Naive thymus-derived CD4-positive, alpha-beta T cell (primary cell): ENCODE measurements at regions of chr16 and their contacts with region 1.

Region 1: GRCh38 chr16:70523076-70523742 is at the start of gene COG4:
- DNase-seq: peak; percentile 72 to 94 (median 90)
- ATAC-seq: peak; percentile 91
- H3K4me3 ChIP-seq: peak within 1 kb of the TSS; percentile 100
- H3K4me3 Mint-ChIP-seq: peak within 1 kb of the TSS; percentile 93 to 100 (median 98)
- H3K27ac ChIP-seq: peak within 1 kb of the TSS; percentile 95
- H3K27ac Mint-ChIP-seq: peak within 1 kb of the TSS; percentile 98 to 100 (median 99)
- H3K4me1 ChIP-seq: peaks cover 27 to 41% of the 10 kb centered on the region in 2 donors
- H3K4me1 Mint-ChIP-seq: peaks cover 30 to 66% (median 55%) of the 10 kb centered on the region in 7 donors
- H3K27me3 ChIP-seq: no peaks in the 10 kb centered on the region
- H3K27me3 Mint-ChIP-seq: no peaks in the 10 kb centered on the region
- total RNA-seq, gene COG4: 38.3 to 68.6 (median 58.7) TPM

Region 2: GRCh38 chr16:69761983-69762813 is 761.0 kb before region 1 on chr16 and contains the start of gene WWP2:
- CTCF ChIA-PET with region 1: no interaction called
- POLR2A ChIA-PET with region 1: no interaction called
- intact Hi-C with region 1: loop called in 1 of 2 experiments (anchors 2 kb)
- DNase-seq: peak; percentile 68 to 81 (median 77)
- ATAC-seq: peak; percentile 86
- H3K4me3 ChIP-seq: peak within 1 kb of the TSS; percentile 88
- H3K4me3 Mint-ChIP-seq: peak within 1 kb of the TSS; percentile 77 to 96 (median 94)
- H3K27ac ChIP-seq: peak within 1 kb of the TSS; percentile 92
- H3K27ac Mint-ChIP-seq: peak within 1 kb of the TSS; percentile 93 to 99 (median 98)
- H3K4me1 ChIP-seq: peaks cover 10 to 14% of the 10 kb centered on the region in 2 donors
- H3K4me1 Mint-ChIP-seq: peaks cover 16 to 47% (median 37%) of the 10 kb centered on the region in 7 donors
- H3K27me3 ChIP-seq: no peaks in the 10 kb centered on the region
- H3K27me3 Mint-ChIP-seq: peaks cover 0 to 5% (median 0%) of the 10 kb centered on the region in 5 donors
- total RNA-seq, gene WWP2: 58.4 to 81.3 (median 72.1) TPM

Region 3: GRCh38 chr16:70342016-70342415 is 181.2 kb before region 1 on chr16:
- CTCF ChIA-PET with region 1: no interaction called
- POLR2A ChIA-PET with region 1: interaction called, 14 read pairs
- intact Hi-C with region 1: loop called (anchors 1 kb)
- DNase-seq: no peak
- ATAC-seq: no peak
- H3K4me3 ChIP-seq: no peak overlapping the region
- H3K4me3 Mint-ChIP-seq: no peak overlapping the region
- H3K27ac ChIP-seq: no peak overlapping the region
- H3K27ac Mint-ChIP-seq: peak overlapping the region in 3 of 9 donors; percentile 37 to 77 (median 74)
- H3K4me1 ChIP-seq: peaks cover 5 to 6% of the 10 kb centered on the region in 2 donors
- H3K4me1 Mint-ChIP-seq: peaks cover 5 to 16% (median 10%) of the 10 kb centered on the region in 7 donors
- H3K27me3 ChIP-seq: no peaks in the 10 kb centered on the region
- H3K27me3 Mint-ChIP-seq: no peaks in the 10 kb centered on the region

Region 4: DNA sequence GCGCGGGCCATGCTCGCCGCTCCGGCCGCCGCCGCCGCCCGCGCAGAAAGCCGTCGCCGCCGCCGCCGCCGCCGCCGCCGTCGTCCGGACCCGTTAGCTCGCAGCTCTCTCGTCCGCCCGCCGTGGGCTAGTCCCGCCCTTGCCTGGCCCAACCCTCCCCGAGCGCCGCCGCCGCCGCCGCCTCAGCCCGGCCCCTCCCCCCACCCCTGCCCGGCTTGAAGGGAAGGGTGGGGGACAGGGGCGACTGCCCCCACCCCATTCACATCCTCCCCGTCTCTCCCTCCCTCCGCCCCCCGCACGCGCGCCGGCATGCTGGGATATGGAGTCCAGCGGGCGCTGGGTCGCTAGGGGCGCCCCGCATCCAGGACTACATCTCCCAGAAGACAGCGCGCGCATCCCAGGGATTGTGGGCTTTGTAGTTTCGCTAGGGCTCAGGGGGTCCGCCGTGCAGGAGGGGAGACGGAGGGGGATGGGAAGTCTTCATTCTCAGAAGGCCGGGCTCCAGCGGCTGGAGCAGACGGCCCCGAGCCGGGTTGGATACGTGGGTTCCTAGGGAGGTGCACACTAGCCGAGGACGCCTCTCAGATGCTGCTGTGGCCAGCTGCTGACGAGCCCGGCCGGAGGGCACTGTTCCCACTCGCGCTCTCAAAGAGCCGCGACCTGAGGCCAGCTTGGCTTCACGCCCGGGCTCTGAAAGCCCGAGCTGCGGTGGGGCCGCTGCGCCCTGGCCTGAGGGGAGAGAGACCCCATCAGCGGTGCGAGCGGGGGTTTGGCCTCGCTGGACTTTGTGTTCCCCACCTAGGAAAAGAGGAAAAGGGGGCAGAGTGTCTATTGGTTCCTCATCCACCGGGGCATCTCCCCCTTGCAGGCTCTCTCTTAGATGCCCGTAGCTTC is 84.0 kb before region 1 on chr16 and contains the start of gene ST3GAL2:
- CTCF ChIA-PET with region 1: no interaction called
- POLR2A ChIA-PET with region 1: interaction called, 4 read pairs
- intact Hi-C with region 1: loop called (anchors 1 kb)
- DNase-seq: peak; percentile 84 to 94 (median 90)
- ATAC-seq: peak; percentile 99
- H3K4me3 ChIP-seq: peak within 1 kb of the TSS; percentile 82
- H3K4me3 Mint-ChIP-seq: peak within 1 kb of the TSS; percentile 92 to 99 (median 98)
- H3K27ac ChIP-seq: peak within 1 kb of the TSS; percentile 58
- H3K27ac Mint-ChIP-seq: peak within 1 kb of the TSS; percentile 84 to 97 (median 93)
- H3K4me1 ChIP-seq: peaks cover 11 to 23% of the 10 kb centered on the region in 2 donors
- H3K4me1 Mint-ChIP-seq: peaks cover 18 to 46% (median 37%) of the 10 kb centered on the region in 7 donors
- H3K27me3 ChIP-seq: no peaks in the 10 kb centered on the region
- H3K27me3 Mint-ChIP-seq: no peaks in the 10 kb centered on the region
- total RNA-seq, gene ST3GAL2: 16.6 to 35.9 (median 30.4) TPM

Region 5: GRCh38 chr16:70594576-70594975 is 71.4 kb after region 1 on chr16:
- CTCF ChIA-PET with region 1: no interaction called
- POLR2A ChIA-PET with region 1: no interaction called
- intact Hi-C with region 1: no loop called
- DNase-seq: no peak
- ATAC-seq: no peak
- H3K4me3 ChIP-seq: no peak overlapping the region
- H3K4me3 Mint-ChIP-seq: no peak overlapping the region
- H3K27ac ChIP-seq: no peak overlapping the region
- H3K27ac Mint-ChIP-seq: peak overlapping the region in 1 of 9 donors; percentile 60
- H3K4me1 ChIP-seq: no peaks in the 10 kb centered on the region
- H3K4me1 Mint-ChIP-seq: no peaks in the 10 kb centered on the region
- H3K27me3 ChIP-seq: no peaks in the 10 kb centered on the region
- H3K27me3 Mint-ChIP-seq: peaks cover 0 to 6% (median 0%) of the 10 kb centered on the region in 5 donors

Region 6: DNA sequence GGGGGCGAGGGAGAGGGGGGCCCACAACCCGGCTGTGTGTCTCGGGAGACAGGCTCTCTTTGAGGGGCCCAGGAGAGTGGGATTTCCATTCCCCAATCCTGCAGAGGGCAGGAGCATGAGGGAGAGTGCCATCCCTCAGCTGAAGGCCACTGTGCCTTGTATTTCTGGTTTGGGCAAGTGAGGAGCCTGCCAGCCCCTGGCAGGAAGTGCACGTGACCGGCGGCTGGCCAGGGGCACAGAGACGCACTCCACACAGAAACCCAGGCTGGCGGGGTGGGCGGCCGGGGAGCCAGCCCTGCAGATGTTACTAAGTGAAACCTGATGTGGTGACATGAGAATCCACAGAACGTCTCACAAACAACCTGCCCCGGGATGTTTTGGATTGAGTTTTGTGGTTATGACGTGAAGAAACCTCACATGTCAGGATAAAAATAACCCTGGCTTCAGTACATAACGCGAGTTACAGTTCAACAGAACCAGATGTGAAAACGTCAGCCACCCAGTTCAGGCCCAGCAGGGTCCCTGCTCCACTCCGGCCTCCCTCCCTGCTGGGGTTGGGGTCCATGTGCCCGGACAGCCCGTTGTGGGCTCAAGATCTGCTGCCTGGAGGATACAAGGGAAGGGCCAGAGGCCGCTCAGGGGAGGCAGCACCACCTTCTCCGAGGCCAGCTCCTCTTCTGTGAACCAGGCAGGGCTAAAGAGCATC is 214.3 kb after region 1 on chr16:
- CTCF ChIA-PET with region 1: no interaction called
- POLR2A ChIA-PET with region 1: no interaction called
- intact Hi-C with region 1: loop called in 1 of 2 experiments (anchors 2 kb)
- DNase-seq: peak; percentile 41 to 88 (median 81)
- ATAC-seq: peak; percentile 91
- H3K4me3 ChIP-seq: no peak overlapping the region
- H3K4me3 Mint-ChIP-seq: peak overlapping the region; percentile 60 to 90 (median 78)
- H3K27ac ChIP-seq: peak overlapping the region; percentile 76
- H3K27ac Mint-ChIP-seq: peak overlapping the region; percentile 87 to 100 (median 98)
- H3K4me1 ChIP-seq: peaks cover 18 to 32% of the 10 kb centered on the region in 2 donors
- H3K4me1 Mint-ChIP-seq: peaks cover 25 to 70% (median 48%) of the 10 kb centered on the region in 7 donors
- H3K27me3 ChIP-seq: no peaks in the 10 kb centered on the region
- H3K27me3 Mint-ChIP-seq: no peaks in the 10 kb centered on the region

Region 7: DNA sequence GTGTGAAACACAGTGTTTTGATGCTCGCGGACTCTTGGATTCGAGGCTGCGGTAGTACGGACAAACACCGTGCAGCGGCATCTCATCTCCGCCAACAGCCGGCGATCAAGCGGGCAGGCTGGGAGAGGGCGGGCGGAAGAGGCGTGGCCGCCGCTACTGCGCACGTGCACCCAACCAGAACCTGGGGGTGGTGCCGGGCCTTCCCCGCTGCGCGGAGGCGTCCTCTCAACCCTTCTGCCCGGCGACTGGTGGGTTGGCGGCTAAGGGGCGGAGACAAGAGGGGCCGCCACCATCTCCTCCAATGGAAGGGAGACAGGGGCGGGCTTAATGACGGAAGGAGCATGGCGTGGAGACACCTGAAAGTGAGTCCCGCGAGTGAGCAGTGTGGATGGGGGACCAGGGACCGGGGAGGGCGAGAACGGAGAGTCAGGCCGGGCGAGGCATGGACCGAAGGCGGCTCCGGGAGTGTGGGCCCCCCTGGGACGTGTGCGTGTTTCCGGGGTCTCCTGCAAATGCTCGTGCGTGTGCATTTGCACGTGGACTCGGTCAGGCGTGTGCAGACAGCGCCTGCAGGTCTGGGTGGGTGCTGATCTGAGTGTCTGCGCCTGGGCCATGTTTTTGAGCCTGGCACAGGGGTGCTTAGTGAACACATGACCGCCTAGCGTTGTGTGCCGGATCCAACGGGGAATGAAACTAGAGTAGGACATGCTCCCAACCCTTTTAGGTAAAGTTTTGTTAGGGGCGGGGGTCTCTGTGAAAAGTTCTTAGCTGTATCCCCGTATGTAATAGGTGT is 1485.4 kb after region 1 on chr16 and contains the start of gene DHODH:
- CTCF ChIA-PET with region 1: no interaction called
- POLR2A ChIA-PET with region 1: no interaction called
- intact Hi-C with region 1: loop called in 1 of 2 experiments (anchors 2 kb)
- DNase-seq: peak; percentile 92 to 99 (median 97)
- ATAC-seq: peak; percentile 100
- H3K4me3 ChIP-seq: peak within 1 kb of the TSS; percentile 100
- H3K4me3 Mint-ChIP-seq: peak within 1 kb of the TSS; percentile 92 to 100 (median 98)
- H3K27ac ChIP-seq: peak within 1 kb of the TSS; percentile 62
- H3K27ac Mint-ChIP-seq: peak within 1 kb of the TSS; percentile 75 to 96 (median 89)
- H3K4me1 ChIP-seq: no peaks in the 10 kb centered on the region
- H3K4me1 Mint-ChIP-seq: peaks cover 9 to 22% (median 16%) of the 10 kb centered on the region in 7 donors
- H3K27me3 ChIP-seq: no peaks in the 10 kb centered on the region
- H3K27me3 Mint-ChIP-seq: peaks cover 0 to 3% (median 0%) of the 10 kb centered on the region in 5 donors
- total RNA-seq, gene DHODH: 4.9 to 15.6 (median 14.0) TPM